AG04449 (cell line): ENCODE measurements at regions of chr1 and their contacts with region 1.

Region 1: DNA sequence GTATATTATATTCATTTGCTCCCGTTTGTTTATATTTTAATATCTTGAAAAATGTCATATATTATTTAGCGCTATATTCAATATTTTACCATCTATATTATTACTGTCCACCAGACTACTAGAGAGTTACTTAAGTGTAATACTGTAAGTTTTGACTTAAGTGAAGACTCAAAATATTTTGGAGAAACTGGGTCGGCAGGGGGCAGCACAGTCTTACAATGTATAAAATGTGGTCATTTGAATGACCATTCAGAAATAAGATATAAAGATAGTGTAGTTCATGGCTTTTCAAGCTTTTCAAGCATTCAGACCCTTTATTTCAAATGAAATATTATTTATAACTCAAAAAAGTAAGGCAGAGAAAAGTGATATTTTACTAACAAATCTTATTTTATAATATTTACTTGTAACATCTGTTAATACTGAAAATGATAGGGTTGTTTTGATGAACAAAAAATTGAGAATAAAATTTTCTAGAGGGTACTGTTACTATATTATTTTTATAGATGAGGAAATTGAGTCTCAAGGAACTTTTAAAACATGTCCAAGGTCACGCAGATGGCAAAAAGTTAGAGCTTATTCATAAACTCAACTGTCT is 89.0 kb upstream of the SERTAD4 start:
- DNase-seq: peak; percentile 23
- H3K4me3 ChIP-seq: no peak overlapping the region
- CTCF ChIP-seq: peak; percentile 39

Region 2: GRCh38 chr1:210132582-210132981 is 11.0 kb before region 1 on chr1:
- CTCF ChIA-PET with region 1: interaction called, 14 read pairs
- POLR2A ChIA-PET with region 1: no interaction called
- DNase-seq: no peak
- H3K4me3 ChIP-seq: no peak overlapping the region
- CTCF ChIP-seq: no peak

Region 3: DNA sequence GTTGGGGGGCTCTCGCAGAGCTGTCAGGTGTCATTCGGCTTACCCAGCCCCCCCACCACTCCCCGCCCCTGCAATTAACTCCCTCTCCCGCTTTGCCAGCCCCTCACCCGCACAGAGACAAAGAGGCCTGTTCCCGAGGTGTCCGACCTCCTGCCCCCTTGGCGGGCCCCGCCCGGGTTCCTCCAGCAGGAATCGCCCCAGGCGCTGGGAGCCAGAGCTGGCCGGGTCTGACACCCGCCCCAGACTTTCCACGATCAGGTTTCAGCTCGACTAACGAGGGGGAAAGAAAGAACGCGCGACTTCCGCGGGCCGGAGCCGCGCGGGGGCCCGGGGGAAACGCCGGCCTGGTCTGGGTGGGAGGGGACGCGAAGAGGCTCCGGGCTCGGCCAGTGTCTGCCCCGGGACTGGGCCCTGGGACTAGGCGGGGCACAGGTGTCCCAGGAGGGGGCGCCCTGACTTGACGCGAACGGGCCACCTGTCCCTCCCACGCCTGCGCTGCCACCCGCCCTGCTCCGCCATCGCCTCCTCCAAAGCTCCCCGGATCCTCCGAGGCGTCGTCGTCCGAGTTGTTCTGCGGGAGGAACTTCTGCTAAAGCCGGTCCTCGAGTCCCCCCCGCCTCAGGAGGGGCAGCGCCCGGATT is 148.8 kb after region 1 on chr1:
- CTCF ChIA-PET with region 1: interaction called, 10 read pairs
- POLR2A ChIA-PET with region 1: no interaction called
- DNase-seq: no peak
- H3K4me3 ChIP-seq: peak overlapping the region; percentile 40
- CTCF ChIP-seq: peak; percentile 3

Region 4: GRCh38 chr1:210311726-210312493 is 168.3 kb after region 1 on chr1:
- CTCF ChIA-PET with region 1: interaction called, 150 read pairs
- POLR2A ChIA-PET with region 1: no interaction called
- DNase-seq: no peak
- H3K4me3 ChIP-seq: no peak overlapping the region
- CTCF ChIP-seq: no peak

Region 5: GRCh38 chr1:210400043-210400840 is 256.7 kb after region 1 on chr1:
- CTCF ChIA-PET with region 1: interaction called, 33 read pairs
- POLR2A ChIA-PET with region 1: no interaction called
- DNase-seq: peak; percentile 38
- H3K4me3 ChIP-seq: no peak overlapping the region
- CTCF ChIP-seq: peak; percentile 86